ENCODE measurements at regions of chr7 and their contacts with region 1.

Region 1: DNA sequence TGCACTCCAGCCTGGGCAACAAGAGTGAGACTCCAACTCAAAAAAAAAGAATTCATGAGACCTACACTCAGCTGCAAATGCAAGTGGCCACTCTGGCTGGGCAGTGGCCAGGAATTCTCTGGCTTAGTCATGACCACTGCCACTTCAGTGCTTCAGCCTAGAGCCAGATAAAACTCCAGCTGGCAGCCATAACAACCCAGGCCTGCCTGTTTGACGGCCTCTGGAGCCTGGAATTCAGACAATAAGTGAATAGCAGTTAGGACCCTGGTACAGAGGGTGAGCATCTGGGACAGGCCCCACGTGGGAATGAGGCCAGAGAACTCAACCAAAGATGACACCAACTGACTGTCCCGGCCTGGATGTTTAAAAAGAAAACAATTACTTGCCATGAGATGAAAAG is 18.9 kb downstream of the RCC1L start:
- DNase-seq: no peak
- H3K4me3 ChIP-seq: no peak overlapping the region
- H3K27ac ChIP-seq: no peak overlapping the region
- H3K4me1 ChIP-seq: no peaks in the 10 kb centered on the region
- CTCF ChIP-seq: no peak

Region 2: DNA sequence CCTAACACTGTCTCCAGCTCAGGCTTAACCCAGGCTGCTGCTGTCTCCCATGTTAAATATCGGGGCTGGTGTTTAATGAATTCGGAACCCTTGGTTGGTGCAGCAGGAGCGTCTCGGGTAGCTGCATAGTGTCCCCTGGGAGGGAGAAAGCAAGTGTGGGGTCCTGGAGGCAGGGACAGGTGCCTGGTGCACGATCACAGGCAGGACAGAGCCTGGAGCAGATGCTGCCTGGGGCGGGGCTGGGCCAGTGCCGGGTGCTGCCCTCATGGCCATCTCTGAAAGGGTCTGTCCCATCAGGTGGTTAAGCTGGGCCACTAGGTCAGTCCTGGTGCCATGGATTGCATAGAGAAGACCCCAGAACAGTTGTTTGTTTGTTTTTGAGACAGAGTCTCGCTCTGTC is 16.9 kb before region 1 on chr7:
- CTCF ChIA-PET with region 1: no interaction called
- POLR2A ChIA-PET with region 1: no interaction called
- intact Hi-C with region 1: loop called (anchors 2 kb)
- DNase-seq: no peak
- H3K4me3 ChIP-seq: no peak overlapping the region
- H3K27ac ChIP-seq: no peak overlapping the region
- H3K4me1 ChIP-seq: no peaks in the 10 kb centered on the region
- CTCF ChIP-seq: no peak

Measured in OCI-LY7 (cell line).